Activated T-helper 2 cell treated with anti-CD3 and anti-CD28 coated beads, Interferon-gamma antibody, Interleukin-2, Interleukin-4, amounts not matched to agents 10 μg/mL and 5 μg/mL and 100 μg/mL, durations not matched to agents 14 hours and 24 hours and 36 hours (primary cell): ENCODE measurements at regions of chr13 and their contacts with region 1.

Region 1: DNA sequence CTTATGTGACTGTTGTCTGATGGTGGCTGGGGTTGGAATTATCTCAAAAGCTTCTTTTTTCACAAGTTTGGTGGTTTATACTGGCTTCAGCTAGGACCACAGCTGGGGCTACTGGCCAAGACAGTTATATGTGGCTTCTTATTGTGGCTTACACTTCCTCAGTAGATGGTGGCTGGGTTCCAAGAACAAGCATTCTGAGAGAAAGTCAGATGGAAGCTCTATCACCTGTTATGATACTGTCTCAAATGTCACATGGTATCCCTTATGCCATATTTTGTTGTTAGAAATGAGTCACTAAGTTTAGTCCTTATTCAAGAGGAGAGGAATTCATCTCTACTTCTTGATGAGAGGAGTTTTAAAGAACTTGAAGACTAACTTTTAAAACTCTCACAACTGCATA is 41.6 kb downstream of the NDFIP2 start:
- DNase-seq: peak; percentile 58
- H3K4me3 Mint-ChIP-seq: peak overlapping the region; percentile 57
- H3K27ac Mint-ChIP-seq: peak overlapping the region; percentile 89
- H3K4me1 Mint-ChIP-seq: peaks cover 39% of the 10 kb centered on the region
- H3K27me3 Mint-ChIP-seq: no peaks in the 10 kb centered on the region

Region 2: DNA sequence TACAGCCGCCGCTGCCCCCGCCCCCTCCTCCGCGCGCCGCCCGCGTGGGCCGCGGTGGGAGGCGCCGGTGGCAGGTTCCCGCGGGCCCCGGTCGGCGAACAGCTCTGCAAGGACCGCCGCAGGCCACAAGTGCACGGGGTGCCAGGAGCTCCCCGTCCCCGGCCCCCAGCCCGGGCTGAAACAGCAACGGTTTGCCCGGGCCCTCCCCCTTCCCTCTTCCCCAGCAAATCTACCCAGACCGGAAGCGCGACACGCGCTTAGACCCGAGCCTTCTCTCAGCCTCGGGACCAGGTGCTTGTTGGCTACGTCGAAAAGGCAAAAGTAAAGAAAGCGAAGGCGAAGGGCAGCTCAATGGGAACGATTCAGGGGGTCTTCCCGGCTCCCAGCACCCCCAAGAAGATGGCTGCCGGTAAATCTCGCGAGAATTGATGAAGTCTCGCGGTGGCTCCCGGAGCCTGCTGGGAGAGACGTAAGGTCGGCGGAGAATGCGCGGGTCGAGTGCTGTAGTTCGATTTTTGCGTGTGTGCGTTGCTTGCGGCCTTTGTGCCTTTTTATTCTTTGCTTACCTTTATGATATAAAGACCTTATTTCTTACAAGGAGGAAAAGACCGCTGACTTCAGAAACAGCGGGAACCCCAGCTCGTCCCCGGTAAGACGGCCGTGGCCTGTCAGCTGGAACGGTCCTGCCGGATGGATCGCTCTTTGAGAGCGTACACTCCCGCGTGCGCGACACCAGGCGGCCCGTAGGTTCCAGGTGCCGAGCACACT is 116.6 kb before region 1 on chr13 and contains the start of gene RBM26:
- intact Hi-C with region 1: loop called (anchors 1 kb)
- DNase-seq: peak; percentile 92
- H3K4me3 Mint-ChIP-seq: peak within 1 kb of the TSS; percentile 89
- H3K27ac Mint-ChIP-seq: peak within 1 kb of the TSS; percentile 97
- H3K4me1 Mint-ChIP-seq: peaks cover 42% of the 10 kb centered on the region
- H3K27me3 Mint-ChIP-seq: no peaks in the 10 kb centered on the region
- total RNA-seq, gene RBM26: 93.7 and 94.2 TPM in 2 replicates

Region 3: DNA sequence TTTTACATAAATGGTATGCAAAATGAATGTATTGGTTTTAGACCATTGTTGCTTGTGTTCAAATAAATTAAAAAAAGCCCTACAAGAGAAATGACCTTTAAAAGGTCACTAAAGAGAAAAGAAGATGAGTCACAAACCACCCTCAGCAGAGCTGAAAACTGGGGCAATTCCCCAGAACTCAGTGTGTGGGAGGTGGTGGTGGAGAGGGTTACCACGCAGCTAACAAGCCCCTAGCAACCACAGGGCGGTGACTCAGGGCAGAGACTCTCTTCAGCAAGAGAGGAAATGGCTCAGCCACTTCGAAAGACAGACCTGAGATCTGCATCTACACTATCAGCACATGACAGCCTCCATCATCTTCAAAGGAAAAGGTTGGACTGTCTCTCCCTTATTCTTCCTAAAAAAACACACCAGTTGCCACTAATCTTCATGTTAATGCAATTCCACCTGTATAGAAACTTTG is 71.1 kb before region 1 on chr13:
- intact Hi-C with region 1: loop called (anchors 1 kb)
- DNase-seq: peak; percentile 88
- H3K4me3 Mint-ChIP-seq: peak overlapping the region; percentile 75
- H3K27ac Mint-ChIP-seq: peak overlapping the region; percentile 97
- H3K4me1 Mint-ChIP-seq: peaks cover 80% of the 10 kb centered on the region
- H3K27me3 Mint-ChIP-seq: no peaks in the 10 kb centered on the region

Region 4: GRCh38 chr13:79491715-79492114 is 30.9 kb before region 1 on chr13:
- intact Hi-C with region 1: loop called (anchors 2 kb)
- DNase-seq: no peak
- H3K4me3 Mint-ChIP-seq: peak overlapping the region; percentile 78
- H3K27ac Mint-ChIP-seq: peak overlapping the region; percentile 95
- H3K4me1 Mint-ChIP-seq: peaks cover 87% of the 10 kb centered on the region
- H3K27me3 Mint-ChIP-seq: no peaks in the 10 kb centered on the region

Region 5: DNA sequence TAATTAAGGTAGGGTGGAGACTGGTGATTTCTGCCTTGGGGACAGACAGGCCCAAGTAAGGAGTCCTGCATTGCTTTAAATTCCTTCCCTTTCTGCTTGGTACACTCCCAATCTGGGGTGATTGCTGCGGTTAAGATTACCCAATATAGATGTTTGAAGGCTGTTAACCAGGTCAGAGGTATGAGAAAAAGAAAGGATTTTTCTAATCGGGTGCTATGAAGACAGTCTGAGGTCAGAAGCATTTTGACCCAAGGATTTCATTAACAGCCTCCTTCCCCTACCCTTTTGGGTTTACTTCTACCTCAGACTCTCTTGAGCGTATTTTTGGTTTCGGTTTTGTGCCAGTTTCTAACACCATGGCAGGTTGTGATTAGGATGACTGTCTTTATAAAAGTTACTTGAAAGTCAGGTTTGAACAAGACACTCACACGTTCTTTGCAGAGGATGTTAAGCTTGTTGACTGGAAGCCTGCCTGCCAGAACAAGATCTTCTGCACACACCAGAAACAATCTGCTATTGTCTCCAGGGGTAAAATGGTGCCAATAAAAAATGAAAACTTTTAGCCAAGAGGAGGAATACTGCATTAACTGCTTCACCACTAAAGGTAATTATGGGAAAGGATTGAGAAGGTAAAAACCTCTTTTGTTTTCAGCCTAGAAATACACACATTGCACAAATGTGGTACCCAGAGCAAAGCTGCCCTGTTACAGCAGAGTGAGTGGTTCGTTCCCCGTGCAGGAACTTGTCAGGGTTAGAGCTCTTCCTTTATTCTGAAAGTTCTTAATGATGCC is 67.2 kb after region 1 on chr13:
- intact Hi-C with region 1: no loop called
- DNase-seq: no peak
- H3K4me3 Mint-ChIP-seq: no peak overlapping the region
- H3K27ac Mint-ChIP-seq: no peak overlapping the region
- H3K4me1 Mint-ChIP-seq: no peaks in the 10 kb centered on the region
- H3K27me3 Mint-ChIP-seq: no peaks in the 10 kb centered on the region